CD8-positive, alpha-beta T cell (primary cell): ENCODE measurements at regions of chr4 and their contacts with region 1.

Region 1: DNA sequence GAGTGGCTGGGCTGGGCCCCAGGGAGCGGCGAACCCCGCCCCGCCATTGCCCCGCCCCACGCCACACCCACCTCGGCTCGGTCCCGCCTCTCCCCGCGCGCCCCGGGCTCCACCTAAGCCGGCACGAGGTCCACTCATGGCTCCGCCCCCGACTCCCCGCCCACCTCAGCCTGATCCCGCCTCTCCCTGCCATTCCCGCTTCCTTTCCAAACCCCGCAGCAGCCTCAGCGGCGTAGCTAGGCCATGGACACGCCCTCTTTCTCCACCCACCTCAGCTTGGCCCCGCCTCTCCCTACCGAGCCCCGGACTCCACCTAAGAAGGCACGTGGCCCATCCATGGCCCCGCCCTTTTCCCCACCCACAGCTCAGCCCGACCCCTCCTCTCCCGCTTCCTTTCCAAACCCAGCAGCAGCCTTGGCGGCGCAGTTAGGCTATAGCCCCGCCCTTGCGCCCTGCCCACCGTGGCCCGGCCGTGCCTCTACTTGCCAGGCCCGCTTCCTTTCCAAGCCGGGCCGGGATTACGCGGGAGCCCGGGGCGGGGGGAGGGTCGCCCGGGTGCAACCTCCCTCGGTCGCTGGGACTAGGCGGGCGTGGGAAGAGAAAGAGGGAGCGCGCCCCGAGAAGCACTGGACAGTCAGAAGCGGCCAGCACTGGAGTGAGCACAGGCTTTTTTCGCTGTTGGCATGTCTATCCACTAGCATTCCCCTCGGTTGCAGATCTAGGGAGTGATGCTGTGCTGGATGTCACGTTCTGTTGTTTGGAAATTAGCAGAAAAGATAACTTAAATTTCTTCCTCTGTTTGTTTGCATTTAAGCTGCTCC is at the start of gene RELL1:
- DNase-seq: peak; percentile 95 to 99 (median 98)
- ATAC-seq: peak; percentile 83
- H3K4me3 ChIP-seq: peak within 1 kb of the TSS; percentile 61 to 82
- H3K4me3 Mint-ChIP-seq: peak within 1 kb of the TSS; percentile 92
- H3K27ac ChIP-seq: peak within 1 kb of the TSS; percentile 84 to 92
- H3K27ac Mint-ChIP-seq: peak within 1 kb of the TSS; percentile 97
- H3K4me1 ChIP-seq: peaks cover 30% of the 10 kb centered on the region
- H3K4me1 Mint-ChIP-seq: peaks cover 41% of the 10 kb centered on the region
- H3K27me3 ChIP-seq: no peaks in the 10 kb centered on the region
- H3K27me3 Mint-ChIP-seq: no peaks in the 10 kb centered on the region
- CTCF ChIP-seq: no peak
- total RNA-seq, gene RELL1: 60.7 to 61.7 TPM

Region 2: DNA sequence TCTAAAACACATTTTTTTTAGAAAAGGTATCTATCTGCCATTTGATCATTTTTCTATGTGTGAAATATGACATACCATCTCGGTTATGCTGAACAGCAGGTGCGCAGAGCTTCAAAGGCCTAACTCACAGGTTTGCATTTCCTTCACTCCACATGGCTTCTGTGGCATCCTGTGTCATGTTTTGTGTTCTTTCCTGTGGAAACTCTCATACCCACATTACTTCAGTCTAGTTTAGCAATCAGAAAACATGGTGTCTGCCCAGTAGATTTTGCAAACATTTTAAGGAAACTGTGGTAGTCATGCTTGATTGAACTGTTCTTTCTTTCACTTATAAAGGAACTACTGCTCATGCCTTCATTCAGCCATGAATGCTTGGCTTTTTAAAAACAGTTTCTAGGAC is 1431.0 kb before region 1 on chr4:
- CTCF ChIA-PET with region 1: no interaction called
- POLR2A ChIA-PET with region 1: no interaction called
- intact Hi-C with region 1: loop called in 1 of 2 experiments (anchors 10 kb)
- DNase-seq: peak; percentile 26 to 95 (median 63)
- ATAC-seq: peak; percentile 93
- H3K4me3 ChIP-seq: no peak overlapping the region
- H3K4me3 Mint-ChIP-seq: peak overlapping the region; percentile 76
- H3K27ac ChIP-seq: peak overlapping the region; percentile 7 to 62
- H3K27ac Mint-ChIP-seq: peak overlapping the region; percentile 89
- H3K4me1 ChIP-seq: peaks cover 35% of the 10 kb centered on the region
- H3K4me1 Mint-ChIP-seq: peaks cover 51% of the 10 kb centered on the region
- H3K27me3 ChIP-seq: no peaks in the 10 kb centered on the region
- H3K27me3 Mint-ChIP-seq: no peaks in the 10 kb centered on the region
- CTCF ChIP-seq: no peak

Region 3: DNA sequence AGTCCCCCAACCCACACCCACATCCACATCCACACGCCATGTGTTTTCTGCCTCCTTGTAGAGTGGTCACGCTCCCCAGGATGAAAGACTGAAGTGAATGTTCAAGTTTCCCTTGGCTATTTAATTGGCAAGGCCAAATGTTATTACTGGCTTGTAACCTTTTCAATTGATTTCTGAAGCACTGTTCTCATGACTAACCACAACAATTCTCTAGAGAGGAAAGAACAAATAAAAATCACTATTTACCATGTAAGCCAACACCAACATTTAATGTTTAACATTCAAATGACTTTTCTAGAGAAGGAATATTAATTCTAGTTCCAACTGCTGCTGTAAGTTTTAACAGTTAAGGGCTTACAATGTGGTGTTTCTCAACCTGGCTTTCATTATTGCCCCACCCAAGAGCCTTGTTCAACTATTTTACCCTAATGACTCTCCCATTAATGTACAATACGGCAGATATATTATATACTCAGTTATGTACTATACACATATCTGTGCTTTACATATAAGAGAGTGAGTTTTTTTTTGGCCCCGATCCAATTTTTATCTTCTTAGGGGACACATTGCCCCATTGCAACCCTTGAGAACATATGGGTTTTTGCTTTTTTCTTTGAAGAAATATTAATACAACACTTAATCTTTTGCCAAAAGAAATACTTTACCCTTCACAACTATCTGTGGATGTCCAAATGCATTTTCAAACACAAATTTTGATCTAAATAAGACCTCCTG is 46.9 kb before region 1 on chr4:
- CTCF ChIA-PET with region 1: no interaction called
- POLR2A ChIA-PET with region 1: no interaction called
- intact Hi-C with region 1: loop called in 1 of 2 experiments (anchors 5 kb)
- DNase-seq: no peak
- ATAC-seq: no peak
- H3K4me3 ChIP-seq: no peak overlapping the region
- H3K4me3 Mint-ChIP-seq: no peak overlapping the region
- H3K27ac ChIP-seq: no peak overlapping the region
- H3K27ac Mint-ChIP-seq: no peak overlapping the region
- H3K4me1 ChIP-seq: no peaks in the 10 kb centered on the region
- H3K4me1 Mint-ChIP-seq: peaks cover 3% of the 10 kb centered on the region
- H3K27me3 ChIP-seq: no peaks in the 10 kb centered on the region
- H3K27me3 Mint-ChIP-seq: no peaks in the 10 kb centered on the region
- CTCF ChIP-seq: no peak

Region 4: DNA sequence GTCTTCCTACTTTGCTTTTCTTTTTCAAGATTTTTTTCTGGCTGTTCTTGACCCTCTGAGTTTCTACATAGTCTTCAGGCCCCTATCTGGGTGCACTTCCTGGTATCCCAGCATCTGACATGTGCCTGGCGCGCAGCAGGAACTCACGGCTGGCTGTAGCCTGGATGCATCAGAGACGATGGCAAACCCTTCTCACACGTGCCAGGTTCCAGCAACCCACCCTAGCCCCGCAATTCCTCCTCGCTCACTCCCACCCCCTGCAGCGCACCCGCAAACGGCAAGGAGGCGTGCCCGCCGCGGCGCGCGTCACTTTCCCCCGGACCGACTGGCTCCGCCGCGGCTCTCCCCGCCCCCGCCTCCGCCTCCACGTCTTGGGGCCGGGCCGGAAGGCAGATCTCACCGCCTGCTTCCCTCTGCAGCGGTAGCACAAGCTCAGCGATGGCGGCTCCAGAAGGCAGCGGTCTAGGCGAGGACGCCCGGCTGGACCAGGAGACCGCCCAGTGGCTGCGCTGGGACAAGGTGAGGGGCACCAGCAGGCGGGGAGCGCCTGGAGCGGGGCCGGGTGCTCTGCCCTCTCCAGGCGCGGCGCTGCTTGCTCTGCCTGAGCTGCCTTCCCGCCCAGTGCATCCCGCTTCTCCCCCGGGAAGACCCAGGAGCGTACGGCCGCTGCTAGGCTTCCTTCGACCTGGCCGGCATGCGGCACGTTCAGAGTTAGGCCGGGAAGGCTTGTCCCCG is 139.9 kb after region 1 on chr4 and contains the start of gene PGM2:
- CTCF ChIA-PET with region 1: interaction called, 4 read pairs
- POLR2A ChIA-PET with region 1: no interaction called
- intact Hi-C with region 1: loop called (anchors 2 kb)
- DNase-seq: peak; percentile 81 to 93 (median 89)
- ATAC-seq: peak; percentile 98
- H3K4me3 ChIP-seq: peak within 1 kb of the TSS; percentile 96 to 99
- H3K4me3 Mint-ChIP-seq: peak within 1 kb of the TSS; percentile 97
- H3K27ac ChIP-seq: peak within 1 kb of the TSS; percentile 76 to 79
- H3K27ac Mint-ChIP-seq: peak within 1 kb of the TSS; percentile 92
- H3K4me1 ChIP-seq: peaks cover 23% of the 10 kb centered on the region
- H3K4me1 Mint-ChIP-seq: peaks cover 53% of the 10 kb centered on the region
- H3K27me3 ChIP-seq: no peaks in the 10 kb centered on the region
- H3K27me3 Mint-ChIP-seq: no peaks in the 10 kb centered on the region
- CTCF ChIP-seq: no peak
- total RNA-seq, gene PGM2: 14.5 to 15.4 TPM

Region 5: DNA sequence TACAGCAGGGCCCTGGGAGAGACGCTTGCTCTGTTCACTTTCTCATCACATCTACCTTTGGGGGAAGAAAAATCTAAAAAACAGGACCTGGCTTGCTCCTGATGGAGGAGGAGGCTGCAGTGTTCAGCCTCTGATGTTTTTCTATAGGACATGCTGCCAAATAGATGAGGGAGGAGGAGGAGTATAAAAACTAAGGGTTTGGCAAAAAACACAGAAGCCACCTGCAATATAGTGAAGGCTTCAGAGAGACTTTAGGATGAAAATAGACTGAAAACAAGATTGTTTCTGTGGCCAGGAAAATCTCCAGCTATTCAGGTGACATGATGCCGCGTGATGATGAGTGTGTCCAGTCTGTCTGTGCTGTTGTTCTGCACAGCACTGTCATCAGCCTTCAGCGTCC is 434.2 kb after region 1 on chr4:
- CTCF ChIA-PET with region 1: no interaction called
- POLR2A ChIA-PET with region 1: no interaction called
- intact Hi-C with region 1: no loop called
- DNase-seq: no peak
- ATAC-seq: no peak
- H3K4me3 ChIP-seq: no peak overlapping the region
- H3K4me3 Mint-ChIP-seq: no peak overlapping the region
- H3K27ac ChIP-seq: no peak overlapping the region
- H3K27ac Mint-ChIP-seq: no peak overlapping the region
- H3K4me1 ChIP-seq: no peaks in the 10 kb centered on the region
- H3K4me1 Mint-ChIP-seq: no peaks in the 10 kb centered on the region
- H3K27me3 ChIP-seq: no peaks in the 10 kb centered on the region
- H3K27me3 Mint-ChIP-seq: no peaks in the 10 kb centered on the region
- CTCF ChIP-seq: no peak

Region 6: GRCh38 chr4:38132107-38132673 is 445.6 kb after region 1 on chr4:
- CTCF ChIA-PET with region 1: no interaction called
- POLR2A ChIA-PET with region 1: no interaction called
- intact Hi-C with region 1: loop called in 1 of 2 experiments (anchors 10 kb)
- DNase-seq: peak; percentile 30 to 94 (median 66)
- ATAC-seq: peak; percentile 72
- H3K4me3 ChIP-seq: no peak overlapping the region
- H3K4me3 Mint-ChIP-seq: peak overlapping the region; percentile 17
- H3K27ac ChIP-seq: peak overlapping the region; percentile 25 to 66
- H3K27ac Mint-ChIP-seq: peak overlapping the region; percentile 93
- H3K4me1 ChIP-seq: peaks cover 53% of the 10 kb centered on the region
- H3K4me1 Mint-ChIP-seq: peaks cover 54% of the 10 kb centered on the region
- H3K27me3 ChIP-seq: no peaks in the 10 kb centered on the region
- H3K27me3 Mint-ChIP-seq: no peaks in the 10 kb centered on the region
- CTCF ChIP-seq: no peak

Region 7: GRCh38 chr4:39181905-39182638 is 1495.5 kb after region 1 on chr4 and contains the start of gene WDR19:
- CTCF ChIA-PET with region 1: no interaction called
- POLR2A ChIA-PET with region 1: interaction called, 3 read pairs
- intact Hi-C with region 1: loop called in 1 of 2 experiments (anchors 5 kb)
- DNase-seq: peak; percentile 97 to 100 (median 98)
- ATAC-seq: peak; percentile 93
- H3K4me3 ChIP-seq: peak within 1 kb of the TSS; percentile 82 to 92
- H3K4me3 Mint-ChIP-seq: peak within 1 kb of the TSS; percentile 43
- H3K27ac ChIP-seq: peak within 1 kb of the TSS; percentile 56 to 63
- H3K27ac Mint-ChIP-seq: no peak within 1 kb of the TSS
- H3K4me1 ChIP-seq: peaks cover 10% of the 10 kb centered on the region
- H3K4me1 Mint-ChIP-seq: peaks cover 6% of the 10 kb centered on the region
- H3K27me3 ChIP-seq: peaks cover 0 to 2% of the 10 kb centered on the region in 2 experiments
- H3K27me3 Mint-ChIP-seq: peaks cover 4% of the 10 kb centered on the region
- CTCF ChIP-seq: peak; percentile 64
- total RNA-seq, gene WDR19: 10.8 to 11.9 TPM